Calu3 (cell line): ENCODE measurements at regions of chr5 and their contacts with region 1.

Region 1: GRCh38 chr5:147558826-147559225 is 49.0 kb upstream of the DPYSL3 start:
- DNase-seq: peak; percentile 75
- H3K4me3 Mint-ChIP-seq: no peak overlapping the region
- H3K27ac Mint-ChIP-seq: no peak overlapping the region
- H3K4me1 Mint-ChIP-seq: peaks cover 17% of the 10 kb centered on the region
- H3K27me3 Mint-ChIP-seq: no peaks in the 10 kb centered on the region
- CTCF ChIP-seq: peak; percentile 77

Region 2: DNA sequence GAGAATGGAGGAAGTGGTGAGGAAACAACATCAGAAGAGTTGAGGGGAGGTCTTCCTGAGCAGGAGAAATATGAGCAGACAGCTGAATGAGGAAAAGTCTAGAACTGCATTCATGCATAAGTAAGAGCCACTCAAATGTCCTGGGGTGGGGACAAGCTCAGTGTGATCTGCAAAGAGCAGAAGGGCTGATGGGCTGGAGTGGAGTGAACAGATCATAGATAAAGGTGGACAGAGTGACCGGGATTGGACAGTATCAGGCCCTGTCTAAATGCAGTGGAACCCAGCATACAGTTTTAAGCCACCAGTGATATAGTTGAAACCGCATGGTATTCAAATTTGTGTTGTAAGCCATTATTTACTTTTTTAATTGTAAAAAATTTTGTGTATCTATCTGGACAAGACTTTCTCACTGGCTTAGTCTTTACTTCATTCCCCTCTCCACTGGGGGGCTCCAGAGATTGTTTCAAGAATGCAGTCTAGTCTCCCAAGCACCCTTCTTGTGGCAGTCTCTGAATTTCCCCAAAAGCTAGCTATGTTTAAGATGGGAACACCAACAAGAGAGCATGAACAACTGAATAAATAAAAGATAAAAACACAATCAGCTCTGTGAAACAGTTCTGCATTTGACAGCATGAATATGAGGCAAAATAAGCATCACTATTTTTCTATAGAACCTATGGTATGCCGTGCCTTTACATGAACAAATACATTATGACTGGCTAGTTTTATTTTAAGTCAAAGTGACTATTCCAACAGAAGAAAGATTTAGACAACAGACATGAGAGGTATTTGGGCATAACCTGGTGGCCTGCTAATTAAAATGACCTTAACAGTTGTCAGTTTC is 334.7 kb before region 1 on chr5:
- CTCF ChIA-PET with region 1: no interaction called
- intact Hi-C with region 1: loop called (anchors 5 kb)
- DNase-seq: peak; percentile 75
- H3K4me3 Mint-ChIP-seq: no peak overlapping the region
- H3K27ac Mint-ChIP-seq: no peak overlapping the region
- H3K4me1 Mint-ChIP-seq: peaks cover 10% of the 10 kb centered on the region
- H3K27me3 Mint-ChIP-seq: no peaks in the 10 kb centered on the region
- CTCF ChIP-seq: peak; percentile 69

Region 3: GRCh38 chr5:147391781-147392180 is 167.0 kb before region 1 on chr5:
- CTCF ChIA-PET with region 1: no interaction called
- intact Hi-C with region 1: loop called (anchors 5 kb)
- DNase-seq: peak; percentile 56
- H3K4me3 Mint-ChIP-seq: no peak overlapping the region
- H3K27ac Mint-ChIP-seq: no peak overlapping the region
- H3K4me1 Mint-ChIP-seq: no peaks in the 10 kb centered on the region
- H3K27me3 Mint-ChIP-seq: no peaks in the 10 kb centered on the region
- CTCF ChIP-seq: peak; percentile 64

Region 4: DNA sequence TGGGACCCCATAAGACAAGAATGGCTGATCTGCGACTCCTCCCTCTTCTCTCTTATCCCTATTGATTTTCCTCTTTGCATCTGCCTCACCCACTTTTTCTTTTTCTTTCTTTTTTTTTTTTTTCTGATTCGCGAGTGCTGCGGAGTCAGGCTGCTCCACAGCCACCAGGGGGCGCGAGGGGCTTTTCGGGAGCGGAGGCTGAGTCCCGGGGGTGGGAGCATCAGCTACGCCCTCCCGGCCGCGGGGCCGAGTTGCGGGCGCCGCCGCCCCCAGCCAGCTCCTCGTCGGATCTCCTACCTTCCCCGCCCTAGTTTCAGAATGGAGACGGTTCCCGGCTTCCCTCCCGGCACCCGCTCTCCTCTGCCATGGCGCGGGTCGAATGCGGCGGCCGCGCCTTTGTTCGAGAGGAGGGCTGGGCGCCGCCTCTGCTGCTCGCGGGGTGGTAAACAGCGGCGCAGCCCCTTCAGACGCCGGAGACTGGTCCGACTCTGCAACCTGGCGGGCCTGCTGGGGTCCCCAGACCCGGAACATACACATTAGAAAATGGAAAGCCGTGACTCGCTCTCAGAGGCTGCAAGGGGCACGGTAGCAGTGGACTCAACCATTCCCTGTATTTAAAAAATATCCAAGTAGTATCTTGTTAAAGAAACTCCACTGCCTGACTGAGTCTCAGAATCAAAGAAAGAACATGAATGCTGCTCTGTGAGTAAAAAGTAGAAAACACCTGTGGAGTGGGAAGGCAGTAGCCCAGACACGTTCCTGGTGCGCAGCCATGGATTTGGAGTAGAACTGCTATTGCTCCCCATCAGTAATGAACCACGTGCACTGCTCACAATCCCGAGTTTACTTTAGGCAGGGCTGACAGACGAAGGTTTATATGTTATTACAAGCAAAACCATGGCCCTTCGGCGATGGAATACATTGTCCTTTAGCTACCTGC is 104.7 kb before region 1 on chr5:
- CTCF ChIA-PET with region 1: interaction called, 6 read pairs
- intact Hi-C with region 1: loop called (anchors 1 kb)
- DNase-seq: peak; percentile 95
- H3K4me3 Mint-ChIP-seq: peak overlapping the region; percentile 92
- H3K27ac Mint-ChIP-seq: peak overlapping the region; percentile 0
- H3K4me1 Mint-ChIP-seq: peaks cover 8% of the 10 kb centered on the region
- H3K27me3 Mint-ChIP-seq: peaks cover 21% of the 10 kb centered on the region
- CTCF ChIP-seq: peak; percentile 96

Region 5: GRCh38 chr5:147464211-147464610 is 94.6 kb before region 1 on chr5:
- CTCF ChIA-PET with region 1: interaction called, 15 read pairs
- intact Hi-C with region 1: loop called (anchors 1 kb)
- DNase-seq: peak; percentile 65
- H3K4me3 Mint-ChIP-seq: no peak overlapping the region
- H3K27ac Mint-ChIP-seq: no peak overlapping the region
- H3K4me1 Mint-ChIP-seq: no peaks in the 10 kb centered on the region
- H3K27me3 Mint-ChIP-seq: no peaks in the 10 kb centered on the region
- CTCF ChIP-seq: peak; percentile 76

Region 6: GRCh38 chr5:147763791-147764525 is 205.1 kb after region 1 on chr5:
- CTCF ChIA-PET with region 1: no interaction called
- intact Hi-C with region 1: no loop called
- DNase-seq: peak; percentile 32
- H3K4me3 Mint-ChIP-seq: no peak overlapping the region
- H3K27ac Mint-ChIP-seq: peak overlapping the region; percentile 10
- H3K4me1 Mint-ChIP-seq: peaks cover 20% of the 10 kb centered on the region
- H3K27me3 Mint-ChIP-seq: no peaks in the 10 kb centered on the region
- CTCF ChIP-seq: no peak